Endothelial cell of umbilical vein (primary cell): ENCODE measurements at regions of chr11 and their contacts with region 1.

Region 1: GRCh38 chr11:76721755-76722677 is 51.5 kb upstream of the LRRC32 start:
- DNase-seq: peak; percentile 77
- H3K4me3 ChIP-seq: no peak overlapping the region
- H3K27ac ChIP-seq: no peak overlapping the region
- H3K4me1 ChIP-seq: no peaks in the 10 kb centered on the region
- H3K27me3 ChIP-seq: peaks cover 20 to 24% of the 10 kb centered on the region in 2 experiments
- CTCF ChIP-seq: peak; percentile 92 to 95
- POLR2A ChIP-seq: no peak

Region 2: DNA sequence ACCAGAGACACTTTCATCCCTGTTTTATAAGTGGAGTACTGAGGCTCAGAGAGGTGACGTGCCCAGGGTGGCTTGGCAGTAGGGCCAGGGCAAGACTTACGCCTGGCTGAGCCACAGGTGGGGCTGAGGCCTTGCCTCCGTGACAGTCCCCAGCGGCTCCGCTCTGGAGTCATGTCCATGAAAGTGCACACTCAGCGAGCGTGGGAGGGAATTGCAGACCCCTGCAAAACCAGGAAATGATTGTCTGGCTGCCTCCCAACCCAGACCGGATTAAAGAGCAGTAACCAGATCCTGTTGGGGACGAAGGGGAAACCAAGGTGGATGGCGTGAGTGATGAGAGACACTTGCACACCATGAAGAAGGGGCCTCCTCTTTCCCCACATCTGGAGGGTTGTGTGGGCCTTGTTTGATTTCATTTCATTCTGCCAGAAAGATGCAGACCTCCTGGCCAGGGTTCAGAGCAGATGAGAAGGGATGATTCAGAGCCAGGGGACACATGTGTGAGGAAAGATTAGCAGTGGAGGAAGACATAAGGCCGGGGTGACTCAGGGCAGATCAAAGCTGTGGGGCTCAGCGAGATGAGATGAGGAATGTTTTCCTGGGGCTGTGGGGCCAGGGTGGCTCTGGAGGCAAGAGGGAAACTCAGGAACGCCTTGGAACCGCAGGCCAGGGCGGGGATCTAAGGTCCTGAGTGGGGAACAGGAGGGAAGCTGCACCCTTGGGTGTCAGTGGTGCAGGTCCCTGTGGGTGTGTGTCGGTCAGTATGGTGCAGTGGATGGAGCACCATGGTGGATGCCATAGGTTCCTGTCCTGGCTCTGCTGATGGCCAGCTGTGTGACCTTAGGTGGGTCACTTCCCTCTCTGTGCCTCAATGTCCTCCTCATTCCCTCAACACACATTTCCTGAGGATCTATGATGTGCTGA is 21.6 kb before region 1 on chr11:
- CTCF ChIA-PET with region 1: interaction called, 23 read pairs
- POLR2A ChIA-PET with region 1: no interaction called
- dilution Hi-C with region 1: no loop called
- intact Hi-C with region 1: no loop called
- DNase-seq: peak; percentile 95
- H3K4me3 ChIP-seq: no peak overlapping the region
- H3K27ac ChIP-seq: peak overlapping the region; percentile 53
- H3K4me1 ChIP-seq: peaks cover 29% of the 10 kb centered on the region
- H3K27me3 ChIP-seq: no peaks in the 10 kb centered on the region
- CTCF ChIP-seq: no peak
- POLR2A ChIP-seq: peak; percentile 52

Region 3: DNA sequence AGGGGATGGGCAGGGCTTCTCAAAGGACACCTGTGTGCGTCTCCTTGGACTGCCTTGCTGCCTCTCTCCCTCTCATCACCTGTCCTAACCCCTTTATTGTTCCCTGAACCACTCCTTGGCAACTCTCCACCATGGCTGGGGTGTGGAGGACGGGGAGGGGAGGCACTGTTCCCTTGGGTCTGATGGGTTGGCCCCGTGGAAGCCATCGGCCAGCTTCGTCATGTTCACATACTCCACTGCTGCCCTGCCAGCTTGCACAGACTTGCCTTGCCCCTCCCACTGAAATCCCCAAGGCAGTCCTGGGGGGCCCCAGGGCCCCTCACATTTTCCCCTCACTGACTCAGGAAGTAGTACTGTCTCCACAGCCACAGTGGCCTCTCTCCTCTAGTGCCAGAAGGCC is 15.3 kb before region 1 on chr11:
- CTCF ChIA-PET with region 1: interaction called, 23 read pairs
- POLR2A ChIA-PET with region 1: no interaction called
- dilution Hi-C with region 1: no loop called
- intact Hi-C with region 1: no loop called
- DNase-seq: no peak
- H3K4me3 ChIP-seq: no peak overlapping the region
- H3K27ac ChIP-seq: no peak overlapping the region
- H3K4me1 ChIP-seq: peaks cover 2% of the 10 kb centered on the region
- H3K27me3 ChIP-seq: no peaks in the 10 kb centered on the region
- CTCF ChIP-seq: no peak
- POLR2A ChIP-seq: no peak

Region 4: DNA sequence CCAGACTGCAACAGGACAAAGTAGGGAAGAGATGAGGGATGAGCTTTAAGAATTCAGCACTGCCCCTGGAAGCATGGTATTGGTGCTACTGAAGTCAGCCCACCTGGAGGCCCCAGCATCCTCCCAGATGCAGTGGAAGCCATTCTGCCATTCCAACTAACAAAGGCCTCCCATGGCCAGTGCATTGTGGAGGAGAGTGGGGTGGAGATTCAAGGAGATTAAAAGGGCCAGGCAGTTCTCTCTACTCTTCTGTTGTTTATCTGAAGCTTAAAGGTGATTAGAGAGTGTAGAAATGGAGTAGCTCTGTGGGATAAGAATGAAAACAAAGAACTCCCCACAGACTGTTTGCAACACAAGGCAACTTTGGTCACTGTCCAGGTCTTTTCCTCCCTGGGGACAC is 37.1 kb after region 1 on chr11:
- CTCF ChIA-PET with region 1: interaction called, 10 read pairs
- POLR2A ChIA-PET with region 1: no interaction called
- dilution Hi-C with region 1: no loop called
- intact Hi-C with region 1: no loop called
- DNase-seq: no peak
- H3K4me3 ChIP-seq: no peak overlapping the region
- H3K27ac ChIP-seq: no peak overlapping the region
- H3K4me1 ChIP-seq: peaks cover 12% of the 10 kb centered on the region
- H3K27me3 ChIP-seq: no peaks in the 10 kb centered on the region
- CTCF ChIP-seq: no peak
- POLR2A ChIP-seq: no peak

Region 5: GRCh38 chr11:76830639-76831327 is 108.8 kb after region 1 on chr11:
- CTCF ChIA-PET with region 1: no interaction called
- POLR2A ChIA-PET with region 1: no interaction called
- dilution Hi-C with region 1: no loop called
- intact Hi-C with region 1: no loop called
- DNase-seq: peak; percentile 24
- H3K4me3 ChIP-seq: no peak overlapping the region
- H3K27ac ChIP-seq: no peak overlapping the region
- H3K4me1 ChIP-seq: peaks cover 3% of the 10 kb centered on the region
- H3K27me3 ChIP-seq: no peaks in the 10 kb centered on the region
- CTCF ChIP-seq: no peak
- POLR2A ChIP-seq: no peak

Region 6: GRCh38 chr11:77503015-77503414 is 781.0 kb after region 1 on chr11:
- CTCF ChIA-PET with region 1: no interaction called
- POLR2A ChIA-PET with region 1: no interaction called
- dilution Hi-C with region 1: no loop called
- intact Hi-C with region 1: no loop called
- DNase-seq: no peak
- H3K4me3 ChIP-seq: no peak overlapping the region
- H3K27ac ChIP-seq: no peak overlapping the region
- H3K4me1 ChIP-seq: peaks cover 12% of the 10 kb centered on the region
- H3K27me3 ChIP-seq: peaks cover 5 to 6% of the 10 kb centered on the region in 2 experiments
- CTCF ChIP-seq: no peak
- POLR2A ChIP-seq: no peak